Naive thymus-derived CD4-positive, alpha-beta T cell (primary cell): ENCODE measurements at regions of chr16 and their contacts with region 1.

Region 1: GRCh38 chr16:2734844-2735515 is 15.0 kb upstream of the PRSS27 start:
- DNase-seq: no peak
- ATAC-seq: no peak
- H3K4me3 ChIP-seq: no peak overlapping the region
- H3K4me3 Mint-ChIP-seq: no peak overlapping the region
- H3K27ac ChIP-seq: no peak overlapping the region
- H3K27ac Mint-ChIP-seq: no peak overlapping the region
- H3K4me1 ChIP-seq: no peaks in the 10 kb centered on the region
- H3K4me1 Mint-ChIP-seq: no peaks in the 10 kb centered on the region
- H3K27me3 ChIP-seq: no peaks in the 10 kb centered on the region
- H3K27me3 Mint-ChIP-seq: peaks cover 0 to 3% (median 0%) of the 10 kb centered on the region in 5 donors

Region 2: GRCh38 chr16:2745961-2746360 is 11.0 kb after region 1 on chr16:
- CTCF ChIA-PET with region 1: no interaction called
- POLR2A ChIA-PET with region 1: interaction called, 10 read pairs
- intact Hi-C with region 1: no loop called
- DNase-seq: no peak
- ATAC-seq: no peak
- H3K4me3 ChIP-seq: no peak overlapping the region
- H3K4me3 Mint-ChIP-seq: no peak overlapping the region
- H3K27ac ChIP-seq: no peak overlapping the region
- H3K27ac Mint-ChIP-seq: no peak overlapping the region
- H3K4me1 ChIP-seq: no peaks in the 10 kb centered on the region
- H3K4me1 Mint-ChIP-seq: peaks cover 0 to 15% (median 2%) of the 10 kb centered on the region in 7 donors
- H3K27me3 ChIP-seq: no peaks in the 10 kb centered on the region
- H3K27me3 Mint-ChIP-seq: peaks cover 0 to 1% (median 0%) of the 10 kb centered on the region in 5 donors

Region 3: GRCh38 chr16:2770057-2770951 is 35.3 kb after region 1 on chr16:
- CTCF ChIA-PET with region 1: no interaction called
- POLR2A ChIA-PET with region 1: no interaction called
- intact Hi-C with region 1: no loop called
- DNase-seq: peak in 1 of 9 donors; percentile 7
- ATAC-seq: peak; percentile 28
- H3K4me3 ChIP-seq: no peak overlapping the region
- H3K4me3 Mint-ChIP-seq: peak overlapping the region in 1 of 10 donors; percentile 61
- H3K27ac ChIP-seq: no peak overlapping the region
- H3K27ac Mint-ChIP-seq: peak overlapping the region in 4 of 9 donors; percentile 21 to 65 (median 52)
- H3K4me1 ChIP-seq: peaks cover 0 to 1% of the 10 kb centered on the region in 2 donors
- H3K4me1 Mint-ChIP-seq: peaks cover 5 to 40% (median 17%) of the 10 kb centered on the region in 7 donors
- H3K27me3 ChIP-seq: no peaks in the 10 kb centered on the region
- H3K27me3 Mint-ChIP-seq: no peaks in the 10 kb centered on the region